Psoas muscle (tissue), 8 donors: ENCODE measurements at regions of chr9 and their contacts with region 1.

Region 1: DNA sequence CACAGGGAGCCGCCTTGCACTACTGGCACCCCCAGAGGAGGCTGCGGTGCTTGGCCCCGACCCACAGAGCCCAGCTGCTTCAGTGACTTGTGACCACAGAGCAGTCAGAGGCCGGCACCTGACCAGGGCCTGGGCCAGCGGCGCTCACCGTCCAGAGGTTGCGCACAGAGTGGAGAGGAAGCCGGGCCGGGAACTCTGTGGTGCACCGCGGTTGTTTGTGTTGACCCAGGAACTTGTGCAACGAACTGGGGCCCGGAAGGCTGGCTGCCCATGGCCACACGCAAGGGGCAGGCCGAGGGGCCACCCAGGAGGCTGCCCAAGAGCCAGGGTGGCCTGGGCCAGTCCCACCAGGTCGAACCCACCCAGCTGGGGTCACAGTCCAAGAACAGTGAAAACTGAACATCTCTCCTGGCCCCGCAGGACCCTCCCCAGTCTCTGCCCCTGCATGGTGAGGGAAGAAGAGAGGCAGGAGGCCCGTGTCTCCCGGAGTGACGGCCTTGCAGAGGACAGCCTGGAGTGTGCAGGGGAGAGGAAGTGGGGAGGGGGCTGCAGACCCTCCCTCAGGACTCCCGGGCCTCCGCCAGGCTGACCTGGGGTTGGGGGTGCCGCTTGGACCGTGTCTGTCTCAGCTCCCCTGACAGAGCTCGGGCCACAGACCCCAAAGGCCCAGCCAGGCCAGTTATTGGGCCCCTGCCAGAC is 42.8 kb upstream of the EGFL7 start:
- DNase-seq: peak; percentile 53 to 78
- ATAC-seq: peak in 3 of 4 donors; percentile 13 to 41 (median 20)
- H3K4me3 ChIP-seq: no peak overlapping the region
- H3K27ac ChIP-seq: no peak overlapping the region
- H3K4me1 ChIP-seq: peaks cover 8% of the 10 kb centered on the region
- H3K27me3 ChIP-seq: no peaks in the 10 kb centered on the region
- CTCF ChIP-seq: no peak

Region 2: GRCh38 chr9:136539427-136540421 is 80.2 kb before region 1 on chr9:
- intact Hi-C with region 1: loop called in 1 of 2 experiments (anchors 5 kb)
- DNase-seq: peak; percentile 85 to 90
- ATAC-seq: peak; percentile 40 to 68 (median 53)
- H3K4me3 ChIP-seq: peak overlapping the region; percentile 51
- H3K27ac ChIP-seq: peak overlapping the region; percentile 71
- H3K4me1 ChIP-seq: peaks cover 2% of the 10 kb centered on the region
- H3K27me3 ChIP-seq: no peaks in the 10 kb centered on the region
- CTCF ChIP-seq: no peak